Posterior cingulate gyrus (tissue), 11 donors: ENCODE measurements at regions of chr2 and their contacts with region 1.

Region 1: DNA sequence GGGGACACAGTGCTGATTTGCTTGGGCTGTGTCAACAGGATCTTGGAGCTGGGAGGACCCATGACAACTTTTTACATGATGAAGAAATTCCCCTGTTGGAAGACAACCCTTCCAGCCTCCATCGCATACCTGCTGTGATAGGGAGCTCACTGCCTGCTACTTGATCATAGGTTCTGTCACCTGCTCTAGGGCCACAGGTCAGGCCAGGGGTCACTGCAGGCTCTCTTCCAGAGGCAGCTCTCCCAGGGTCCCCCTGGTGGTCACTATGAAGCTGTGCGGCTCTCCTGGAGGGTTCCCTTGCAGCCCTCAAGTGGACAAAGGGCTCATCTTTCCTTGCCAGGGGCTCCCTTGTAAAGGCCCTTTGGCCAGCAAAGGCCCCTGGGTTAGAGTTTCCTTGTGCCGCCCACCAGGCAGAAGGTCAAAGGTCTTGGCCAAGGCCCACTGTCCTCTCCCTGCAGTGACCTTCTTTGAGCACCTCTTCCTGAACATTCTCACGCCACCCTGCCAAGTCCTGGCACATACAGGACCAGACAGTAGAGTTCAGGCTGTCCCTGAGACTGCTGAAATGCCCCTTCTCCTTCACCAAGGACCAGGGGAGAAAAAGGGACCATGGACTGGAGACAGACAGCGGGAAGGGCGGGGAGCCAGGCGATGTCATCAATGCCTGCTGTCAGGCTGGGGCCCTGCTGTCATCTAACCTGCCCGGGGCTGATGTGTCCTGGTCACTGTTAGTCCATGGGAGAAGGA is 345.1 kb downstream of the DYSF start:
- DNase-seq: peak in 4 of 10 donors; percentile 19 to 83 (median 36)

Region 2: DNA sequence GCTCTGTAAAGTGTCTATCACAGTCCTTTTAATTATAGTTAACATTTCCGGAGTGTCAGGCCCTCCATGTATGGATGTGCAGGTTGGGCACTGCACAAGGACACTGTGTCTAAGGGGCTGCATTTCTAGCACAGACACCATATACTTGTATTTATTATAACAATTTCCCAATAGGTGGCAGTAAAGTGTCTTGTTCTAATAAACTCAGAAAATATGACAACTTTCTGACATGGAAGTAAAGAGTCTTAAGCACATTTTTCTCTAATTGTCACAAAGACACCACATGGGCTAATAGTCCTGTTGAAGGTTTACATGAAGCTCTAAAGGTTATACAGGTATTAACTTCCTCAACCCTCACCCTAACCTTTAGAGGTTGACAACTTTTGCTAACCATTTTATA is 188.5 kb before region 1 on chr2:
- intact Hi-C with region 1: loop called (anchors 5 kb)
- DNase-seq: peak in 4 of 10 donors; percentile 1 to 35 (median 4)

Region 3: GRCh38 chr2:71667256-71668182 is 130.9 kb before region 1 on chr2:
- intact Hi-C with region 1: no loop called
- DNase-seq: peak in 2 of 10 donors; percentile 46 to 55

Region 4: GRCh38 chr2:72137498-72138010 is 339.1 kb after region 1 on chr2:
- intact Hi-C with region 1: loop called (anchors 5 kb)
- DNase-seq: peak; percentile 7 to 95 (median 78)